Head of caudate nucleus (tissue), 42 donors: ENCODE measurements at regions of chr1 and their contacts with region 1.

Region 1: DNA sequence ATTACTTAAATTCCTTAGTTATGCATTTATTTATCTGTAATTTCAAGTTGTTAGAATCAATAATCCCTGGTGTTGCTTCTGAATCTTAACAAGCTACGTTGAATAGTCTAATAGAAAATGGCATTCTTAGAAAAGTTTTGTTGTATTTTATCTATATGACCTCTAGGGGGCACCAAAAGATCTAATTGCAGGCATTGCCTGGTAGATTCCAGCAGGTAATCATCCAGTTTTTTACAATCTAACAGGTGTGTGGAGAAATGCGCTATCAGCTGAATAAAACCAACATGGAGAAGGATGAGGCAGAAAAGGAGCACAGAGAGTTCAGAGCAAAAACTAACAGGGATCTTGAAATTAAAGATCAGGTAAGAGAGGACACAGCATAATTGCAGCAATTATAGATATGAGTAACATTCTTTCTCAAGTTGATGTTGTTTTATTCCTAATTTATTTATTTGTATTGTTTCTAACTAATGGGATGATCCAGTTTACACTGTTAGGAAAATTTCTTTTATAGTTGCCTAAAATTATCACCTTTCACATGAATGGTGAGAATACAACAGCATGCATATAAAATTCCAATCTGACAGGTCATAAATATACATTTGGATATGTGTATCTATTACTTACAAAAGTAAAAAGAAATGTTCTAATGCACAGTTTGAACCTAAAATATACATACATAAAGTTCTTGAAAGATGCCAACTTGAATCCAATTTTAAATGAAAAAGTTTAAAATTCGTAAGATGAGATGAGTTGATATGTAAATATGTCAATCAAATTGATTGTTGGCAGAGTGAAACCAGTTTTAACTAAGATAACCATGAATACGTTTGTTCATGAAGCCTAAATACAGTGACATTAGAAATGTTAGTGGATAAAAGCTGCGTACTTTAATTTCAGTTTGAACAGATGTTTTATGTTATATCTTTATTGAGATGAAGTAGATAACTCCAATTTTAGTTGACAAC is 88.4 kb downstream of the SDCCAG8 start:
- DNase-seq: peak in 1 of 42 donors; percentile 24

Region 2: GRCh38 chr1:242847390-242847993 is 496.8 kb before region 1 on chr1:
- intact Hi-C with region 1: no loop called
- DNase-seq: no peak

Region 3: DNA sequence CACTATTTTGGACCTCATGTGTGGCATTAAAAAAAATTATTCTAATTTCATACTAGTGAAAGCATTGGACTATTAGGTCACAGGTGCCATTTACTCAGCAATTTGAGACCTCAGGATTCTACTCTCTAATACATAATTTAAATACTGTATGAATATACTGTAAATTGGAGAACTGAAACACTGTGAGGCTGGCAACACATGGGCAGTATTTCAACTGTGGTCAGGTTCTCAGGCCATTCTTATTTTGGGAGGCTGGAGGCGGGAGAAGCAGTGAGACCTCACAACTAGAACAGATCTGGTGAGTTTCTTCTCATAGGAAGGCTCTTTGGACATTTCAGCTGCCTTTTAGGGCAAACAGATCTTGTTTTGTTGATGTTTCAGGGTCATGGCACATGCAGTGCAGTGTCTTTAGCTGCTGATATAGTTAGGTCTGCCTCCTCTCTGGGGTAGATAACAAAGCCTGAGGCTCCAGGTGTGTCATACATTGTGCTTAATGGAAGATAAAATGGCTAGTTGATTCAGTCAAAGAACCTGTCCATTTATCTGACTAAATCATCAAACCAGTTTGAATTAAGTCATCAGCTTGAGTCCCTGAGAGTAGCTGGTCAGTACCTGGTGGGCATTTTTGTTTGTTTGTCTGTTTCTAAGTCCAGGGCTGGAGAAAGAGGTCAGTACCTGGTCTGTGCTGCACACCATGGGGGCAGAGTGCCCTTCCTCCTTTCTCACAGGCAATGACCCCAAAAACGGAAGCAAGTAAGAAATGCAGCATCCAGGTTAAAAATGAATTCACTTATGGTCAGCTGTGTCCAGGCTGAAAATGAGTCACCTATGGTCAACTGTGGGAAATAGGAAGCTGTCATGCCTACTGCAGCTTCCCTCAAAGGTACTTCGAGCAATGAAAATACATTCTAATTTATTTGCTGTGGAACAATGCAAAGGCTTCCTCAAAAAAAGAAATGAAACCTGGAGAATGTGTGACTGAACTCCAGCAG is 127.8 kb after region 1 on chr1:
- intact Hi-C with region 1: loop called (anchors 10 kb)
- DNase-seq: no peak